AG04449 (cell line): ENCODE measurements at regions of chr14 and their contacts with region 1.

Region 1: GRCh38 chr14:77067632-77068514 is 30.2 kb upstream of the CIPC start:
- DNase-seq: no peak
- H3K4me3 ChIP-seq: no peak overlapping the region
- CTCF ChIP-seq: peak; percentile 97

Region 2: GRCh38 chr14:76894308-76894892 is 173.5 kb before region 1 on chr14:
- CTCF ChIA-PET with region 1: interaction called, 1,142 read pairs
- POLR2A ChIA-PET with region 1: no interaction called
- DNase-seq: no peak
- H3K4me3 ChIP-seq: no peak overlapping the region
- CTCF ChIP-seq: no peak

Region 3: GRCh38 chr14:76962303-76962660 is 105.6 kb before region 1 on chr14:
- CTCF ChIA-PET with region 1: interaction called, 11 read pairs
- POLR2A ChIA-PET with region 1: no interaction called
- DNase-seq: no peak
- H3K4me3 ChIP-seq: peak overlapping the region; percentile 48
- CTCF ChIP-seq: no peak

Region 4: GRCh38 chr14:77040059-77040740 is 27.7 kb before region 1 on chr14:
- CTCF ChIA-PET with region 1: interaction called, 68 read pairs
- POLR2A ChIA-PET with region 1: no interaction called
- DNase-seq: peak; percentile 90
- H3K4me3 ChIP-seq: peak overlapping the region; percentile 42
- CTCF ChIP-seq: no peak

Region 5: GRCh38 chr14:77097700-77098528 is 30.0 kb after region 1 on chr14 and contains the start of gene CIPC:
- CTCF ChIA-PET with region 1: interaction called, 464 read pairs
- POLR2A ChIA-PET with region 1: no interaction called
- DNase-seq: peak; percentile 88
- H3K4me3 ChIP-seq: peak within 1 kb of the TSS; percentile 100
- CTCF ChIP-seq: no peak